ENCODE measurements at regions of chr9 and their contacts with region 1.

Region 1: GRCh38 chr9:19456996-19457692 is 48.3 kb downstream of the ACER2 start:
- DNase-seq: peak; percentile 74 to 77 (median 74)
- ATAC-seq: peak; percentile 95
- H3K4me3 ChIP-seq: no peak overlapping the region
- H3K27ac ChIP-seq: no peak overlapping the region
- H3K4me1 ChIP-seq: peaks cover 0 to 3% of the 10 kb centered on the region in 2 experiments; a peak in 1 of 5 replicates
- H3K27me3 ChIP-seq: no peaks in the 10 kb centered on the region
- CTCF ChIP-seq: peak; percentile 72 to 90 (median 85)
- EP300 ChIP-seq: no peak
- POLR2A ChIP-seq: no peak
- RAD21 ChIP-seq: peak; percentile 79 to 90

Region 2: GRCh38 chr9:18255158-18255629 is 1202.0 kb before region 1 on chr9:
- CTCF ChIA-PET with region 1: no interaction called
- POLR2A ChIA-PET with region 1: no interaction called
- in situ Hi-C with region 1: loop called (anchors 25 kb)
- intact Hi-C with region 1: loop called (anchors 2 kb)
- DNase-seq: peak; percentile 39 to 68 (median 54)
- ATAC-seq: peak; percentile 80
- H3K4me3 ChIP-seq: no peak overlapping the region
- H3K27ac ChIP-seq: no peak overlapping the region
- H3K4me1 ChIP-seq: no peaks in the 10 kb centered on the region
- H3K27me3 ChIP-seq: no peaks in the 10 kb centered on the region
- CTCF ChIP-seq: peak; percentile 54 to 66 (median 64); a peak in 5 of 6 replicates
- EP300 ChIP-seq: no peak
- POLR2A ChIP-seq: no peak
- RAD21 ChIP-seq: peak; percentile 47 to 66

Region 3: DNA sequence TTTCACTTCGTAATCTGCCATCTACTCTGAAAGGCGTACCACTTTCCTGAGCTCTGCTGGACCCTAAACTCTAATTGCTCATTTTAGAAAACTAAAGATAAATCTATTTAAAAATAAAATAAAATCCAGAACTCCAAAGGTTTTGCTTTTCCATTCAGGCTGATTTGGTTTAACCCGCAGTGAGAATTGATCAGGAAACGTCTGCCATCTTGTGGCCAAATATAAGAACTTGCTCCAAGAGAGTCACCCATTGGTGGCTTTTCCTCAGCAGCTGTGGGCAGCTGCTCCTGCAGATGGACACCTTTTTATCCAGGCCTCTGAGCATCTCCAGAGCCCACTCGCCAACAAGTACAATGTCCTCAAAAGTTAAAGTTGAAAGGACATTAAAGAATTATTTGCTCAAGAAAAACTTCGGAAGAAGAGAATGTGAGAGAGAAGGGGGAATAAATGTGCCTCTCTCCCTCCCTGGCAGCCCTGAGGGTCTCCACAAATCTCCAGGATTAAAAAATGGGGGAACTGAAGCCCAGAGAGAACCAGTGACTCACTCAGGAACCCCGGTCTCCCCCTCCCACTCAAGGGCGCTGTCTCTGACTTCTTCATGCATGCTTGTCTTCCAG is 428.2 kb before region 1 on chr9:
- CTCF ChIA-PET with region 1: no interaction called
- POLR2A ChIA-PET with region 1: no interaction called
- in situ Hi-C with region 1: loop called (anchors 10 kb)
- intact Hi-C with region 1: no loop called
- DNase-seq: peak; percentile 54 to 68 (median 58)
- ATAC-seq: peak; percentile 86
- H3K4me3 ChIP-seq: no peak overlapping the region
- H3K27ac ChIP-seq: no peak overlapping the region
- H3K4me1 ChIP-seq: peaks cover 0 to 7% of the 10 kb centered on the region in 2 experiments; a peak in 2 of 5 replicates
- H3K27me3 ChIP-seq: peaks cover 0 to 14% of the 10 kb centered on the region in 2 experiments; a peak in 2 of 5 replicates
- CTCF ChIP-seq: peak; percentile 53 to 70 (median 56)
- EP300 ChIP-seq: no peak
- POLR2A ChIP-seq: no peak
- RAD21 ChIP-seq: peak; percentile 56 to 65

Region 4: GRCh38 chr9:19174127-19174912 is 282.8 kb before region 1 on chr9:
- CTCF ChIA-PET with region 1: no interaction called
- POLR2A ChIA-PET with region 1: no interaction called
- in situ Hi-C with region 1: no loop called
- intact Hi-C with region 1: loop called (anchors 5 kb)
- DNase-seq: peak in 2 of 4 experiments; percentile 44 to 63
- ATAC-seq: peak; percentile 94
- H3K4me3 ChIP-seq: no peak overlapping the region
- H3K27ac ChIP-seq: no peak overlapping the region
- H3K4me1 ChIP-seq: no peaks in the 10 kb centered on the region; a peak in 2 of 5 replicates
- H3K27me3 ChIP-seq: no peaks in the 10 kb centered on the region
- CTCF ChIP-seq: peak; percentile 16 to 64 (median 52); a peak in 5 of 6 replicates
- EP300 ChIP-seq: no peak
- POLR2A ChIP-seq: no peak
- RAD21 ChIP-seq: peak; percentile 68 to 81

Measured in K562 (cell line).